Esophagus muscularis mucosa (tissue), 4 donors: ENCODE measurements at regions of chr5 and their contacts with region 1.

Region 1: GRCh38 chr5:80255732-80256479 is at the start of gene SERINC5:
- DNase-seq: peak; percentile 95
- H3K4me3 ChIP-seq: peak within 1 kb of the TSS; percentile 70 to 94 (median 88)
- H3K27ac ChIP-seq: peak within 1 kb of the TSS; percentile 91 to 98 (median 94)
- H3K4me1 ChIP-seq: peaks cover 19 to 51% (median 39%) of the 10 kb centered on the region in 4 donors
- H3K27me3 ChIP-seq: no peaks in the 10 kb centered on the region
- CTCF ChIP-seq: no peak
- EP300 ChIP-seq: peak; percentile 53
- POLR2A ChIP-seq: peak; percentile 88
- total RNA-seq, gene SERINC5: 5.8 to 9.1 (median 8.3) TPM

Region 2: GRCh38 chr5:79898611-79899010 is 357.3 kb before region 1 on chr5:
- intact Hi-C with region 1: no loop called
- DNase-seq: no peak
- H3K4me3 ChIP-seq: no peak overlapping the region
- H3K27ac ChIP-seq: no peak overlapping the region
- H3K4me1 ChIP-seq: no peaks in the 10 kb centered on the region
- H3K27me3 ChIP-seq: peaks cover 0 to 13% (median 0%) of the 10 kb centered on the region in 4 donors
- CTCF ChIP-seq: no peak
- EP300 ChIP-seq: no peak
- POLR2A ChIP-seq: no peak

Region 3: DNA sequence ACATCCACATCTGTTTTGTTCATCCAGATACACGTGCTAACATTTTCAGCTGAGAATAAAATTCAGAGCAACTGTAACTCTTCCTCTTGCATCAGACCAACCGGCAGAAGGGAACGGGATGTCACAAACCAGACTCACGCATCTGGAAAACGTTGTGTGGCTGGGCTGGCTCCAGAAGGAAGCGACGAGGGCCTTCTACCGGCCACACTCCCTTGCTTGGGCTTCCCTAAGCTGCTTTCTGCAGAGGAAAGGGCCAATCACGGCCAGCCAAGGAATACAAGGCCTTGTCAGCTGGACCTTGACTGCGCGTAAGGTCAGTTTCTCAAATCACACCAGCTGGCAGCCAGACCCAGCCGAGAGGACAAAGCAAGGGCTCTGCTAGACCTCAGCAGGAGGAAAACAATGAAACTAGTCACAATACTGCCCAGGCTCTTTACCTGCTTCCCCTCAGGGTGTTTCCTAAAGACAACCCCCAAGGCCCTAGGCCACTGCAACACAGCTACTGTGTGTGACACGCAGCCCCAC is 114.7 kb before region 1 on chr5:
- intact Hi-C with region 1: loop called (anchors 5 kb)
- DNase-seq: peak; percentile 94
- H3K4me3 ChIP-seq: no peak overlapping the region
- H3K27ac ChIP-seq: peak overlapping the region; percentile 71 to 82 (median 79)
- H3K4me1 ChIP-seq: peaks cover 15 to 25% (median 17%) of the 10 kb centered on the region in 4 donors
- H3K27me3 ChIP-seq: no peaks in the 10 kb centered on the region
- CTCF ChIP-seq: no peak
- EP300 ChIP-seq: no peak
- POLR2A ChIP-seq: no peak

Region 4: DNA sequence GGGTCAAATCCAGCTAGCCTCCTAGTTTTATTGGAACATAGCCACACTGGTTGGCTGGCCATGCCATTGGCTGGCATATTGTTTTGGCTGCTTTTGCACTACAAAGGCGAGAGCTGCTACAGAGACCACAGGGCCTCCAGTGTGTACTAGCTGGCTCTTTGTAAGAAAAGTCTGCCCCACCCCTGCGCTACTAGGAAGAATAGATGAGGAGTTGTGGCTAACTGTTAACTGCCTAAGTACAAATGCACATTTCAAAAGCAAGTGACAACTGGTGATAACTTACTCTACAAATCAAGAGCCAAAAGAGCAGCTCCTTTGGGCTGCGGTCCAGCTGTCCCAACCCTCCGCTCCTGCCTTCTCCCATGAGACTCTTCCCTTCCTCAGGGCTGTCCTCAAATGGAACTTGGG is 63.9 kb before region 1 on chr5:
- intact Hi-C with region 1: loop called (anchors 5 kb)
- DNase-seq: no peak
- H3K4me3 ChIP-seq: no peak overlapping the region
- H3K27ac ChIP-seq: peak overlapping the region; percentile 60 to 68 (median 64)
- H3K4me1 ChIP-seq: peaks cover 51 to 62% (median 54%) of the 10 kb centered on the region in 4 donors
- H3K27me3 ChIP-seq: no peaks in the 10 kb centered on the region
- CTCF ChIP-seq: no peak
- EP300 ChIP-seq: no peak
- POLR2A ChIP-seq: no peak

Region 5: GRCh38 chr5:80216753-80217596 is 38.9 kb before region 1 on chr5:
- intact Hi-C with region 1: no loop called
- DNase-seq: no peak
- H3K4me3 ChIP-seq: no peak overlapping the region
- H3K27ac ChIP-seq: peak overlapping the region in 1 of 4 donors; percentile 28
- H3K4me1 ChIP-seq: peaks cover 13 to 19% (median 15%) of the 10 kb centered on the region in 4 donors
- H3K27me3 ChIP-seq: no peaks in the 10 kb centered on the region
- CTCF ChIP-seq: no peak
- EP300 ChIP-seq: no peak
- POLR2A ChIP-seq: no peak

Region 6: GRCh38 chr5:80407735-80408482 is 152.0 kb after region 1 on chr5 and contains the start of gene ZFYVE16:
- intact Hi-C with region 1: loop called (anchors 10 kb)
- DNase-seq: peak; percentile 99
- H3K4me3 ChIP-seq: peak within 1 kb of the TSS; percentile 59 to 95 (median 74)
- H3K27ac ChIP-seq: peak within 1 kb of the TSS; percentile 95 to 96 (median 96)
- H3K4me1 ChIP-seq: peaks cover 24 to 37% (median 35%) of the 10 kb centered on the region in 4 donors
- H3K27me3 ChIP-seq: no peaks in the 10 kb centered on the region
- CTCF ChIP-seq: no peak
- EP300 ChIP-seq: no peak
- POLR2A ChIP-seq: peak; percentile 57
- total RNA-seq, gene ZFYVE16: 16.8 to 40.7 (median 22.8) TPM